ENCODE measurements at regions of chr7 and their contacts with region 1.

Region 1: DNA sequence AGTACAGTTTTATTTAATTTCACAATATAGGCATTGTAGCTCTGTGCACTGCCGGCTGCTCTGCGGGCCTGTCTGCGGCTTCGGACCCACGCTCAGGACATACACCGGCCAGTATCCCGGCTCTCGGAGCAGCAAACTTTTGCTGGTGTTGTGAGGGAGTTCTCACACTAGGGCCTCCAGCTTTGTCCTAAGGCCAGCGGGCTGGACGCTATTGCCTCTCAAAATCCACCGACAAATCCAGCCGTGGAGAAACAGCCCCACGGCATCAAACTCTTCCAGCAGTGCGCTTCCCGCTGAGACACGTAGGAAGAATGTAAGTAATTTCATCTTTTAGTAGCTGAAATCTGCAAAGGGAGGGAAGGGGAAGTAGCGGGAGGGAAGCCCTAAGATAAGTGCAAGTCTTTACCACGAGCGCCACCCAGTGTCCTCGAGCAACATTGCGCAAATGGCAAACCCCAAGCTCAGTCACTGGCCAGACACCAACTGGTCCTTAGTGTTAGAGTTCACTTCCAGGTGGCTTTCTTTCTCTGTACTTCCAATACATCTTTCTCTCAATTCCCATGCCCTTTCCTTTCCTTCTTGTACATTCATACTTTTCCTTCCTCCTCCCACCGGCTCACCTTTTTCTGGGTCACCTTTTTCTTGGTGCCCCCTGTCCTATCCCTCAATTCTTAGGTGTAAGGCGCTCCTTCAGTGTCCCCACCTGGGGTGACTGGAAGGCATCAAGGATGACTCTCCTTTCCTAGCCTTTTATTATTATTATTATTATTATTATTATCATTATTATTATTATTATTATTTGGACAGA is 3.0 kb upstream of the DLX5 start:
- DNase-seq: peak; percentile 13
- H3K4me3 ChIP-seq: peak overlapping the region; percentile 16 to 64 (median 38)
- H3K27ac ChIP-seq: no peak overlapping the region
- H3K4me1 ChIP-seq: peaks cover 15 to 53% (median 27%) of the 10 kb centered on the region in 3 donors
- H3K27me3 ChIP-seq: peaks cover 0 to 88% (median 9%) of the 10 kb centered on the region in 4 donors
- CTCF ChIP-seq: peak; percentile 38 to 90 (median 80)
- POLR2A ChIP-seq: no peak

Region 2: GRCh38 chr7:96424396-96424795 is 603.2 kb before region 1 on chr7:
- intact Hi-C with region 1: loop called (anchors 5 kb)
- DNase-seq: no peak
- H3K4me3 ChIP-seq: no peak overlapping the region
- H3K27ac ChIP-seq: no peak overlapping the region
- H3K4me1 ChIP-seq: peaks cover 0 to 5% (median 0%) of the 10 kb centered on the region in 3 donors
- H3K27me3 ChIP-seq: peaks cover 0 to 5% (median 0%) of the 10 kb centered on the region in 4 donors
- CTCF ChIP-seq: no peak
- POLR2A ChIP-seq: no peak

Region 3: DNA sequence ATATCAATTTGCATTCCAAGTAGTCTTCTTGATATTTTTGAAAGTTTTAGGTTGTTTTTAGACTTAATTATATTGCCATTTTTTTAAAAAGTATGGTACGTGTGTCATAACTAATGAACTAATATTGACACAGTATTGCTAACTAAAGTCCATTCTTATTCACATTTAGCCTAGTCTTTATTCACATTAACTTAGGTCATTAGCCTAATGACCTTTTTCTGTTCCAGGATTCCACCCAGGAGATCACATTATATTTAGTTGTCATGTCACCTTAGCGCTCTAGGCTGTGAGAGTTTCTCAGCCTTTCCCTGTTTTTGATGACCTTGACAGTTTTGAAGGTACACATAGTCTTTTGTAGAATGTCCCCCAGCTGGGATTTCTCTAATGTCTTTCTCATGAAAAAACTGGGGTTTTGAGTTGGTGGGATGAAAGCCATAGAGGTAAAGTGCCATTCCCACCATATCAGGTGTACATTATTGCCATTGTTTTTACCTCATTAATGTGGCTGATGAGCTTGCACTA is 128.3 kb after region 1 on chr7:
- intact Hi-C with region 1: no loop called
- DNase-seq: no peak
- H3K4me3 ChIP-seq: no peak overlapping the region
- H3K27ac ChIP-seq: no peak overlapping the region
- H3K4me1 ChIP-seq: no peaks in the 10 kb centered on the region
- H3K27me3 ChIP-seq: no peaks in the 10 kb centered on the region
- CTCF ChIP-seq: no peak
- POLR2A ChIP-seq: no peak